HEK293 (cell line): ENCODE measurements at regions of chr19 and their contacts with region 1.

Region 1: GRCh38 chr19:42450314-42450934 is 7.7 kb upstream of the CXCL17 start:
- H3K4me3 ChIP-seq: no peak overlapping the region
- H3K27ac ChIP-seq: no peak overlapping the region
- H3K4me1 ChIP-seq: no peaks in the 10 kb centered on the region
- CTCF ChIP-seq: peak; percentile 96

Region 2: DNA sequence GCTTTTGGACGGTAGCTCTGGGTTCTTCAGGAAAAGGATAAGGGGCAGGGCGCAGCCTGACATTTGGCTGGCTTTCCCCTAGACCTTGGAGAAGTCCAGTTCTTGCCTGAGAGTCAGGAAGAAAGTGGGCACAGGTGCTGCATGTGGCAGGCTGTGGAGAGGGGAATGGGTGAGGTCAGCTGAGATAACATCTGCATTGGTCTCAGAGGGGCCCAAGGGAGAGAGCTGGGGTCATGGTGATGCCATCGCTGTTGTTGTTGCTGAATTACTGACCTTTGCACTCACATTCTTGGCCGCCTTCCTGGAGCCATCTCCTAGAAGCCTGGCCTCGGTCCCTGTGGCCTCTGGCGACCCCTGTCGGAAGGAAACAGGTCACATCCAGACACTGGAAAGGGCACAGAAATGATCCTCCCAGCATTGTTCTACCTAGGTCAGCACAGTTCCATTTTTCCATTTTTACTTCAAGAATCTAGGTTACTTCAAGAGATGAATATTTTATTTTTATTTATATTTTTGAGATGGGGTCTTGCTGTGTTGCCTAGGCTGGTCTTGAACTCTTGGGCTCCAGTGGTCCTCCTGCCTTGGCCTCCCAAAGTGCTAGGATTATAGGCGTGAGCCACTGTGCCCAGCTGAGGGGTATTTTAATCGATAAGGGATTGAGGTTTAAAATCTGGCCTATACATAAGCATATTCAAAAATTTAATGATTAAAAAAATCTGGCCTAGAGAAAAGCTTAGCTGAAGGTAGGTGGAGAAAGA is 16.7 kb before region 1 on chr19:
- CTCF ChIA-PET with region 1: interaction called, 56 read pairs
- POLR2A ChIA-PET with region 1: no interaction called
- H3K4me3 ChIP-seq: no peak overlapping the region
- H3K27ac ChIP-seq: no peak overlapping the region
- H3K4me1 ChIP-seq: peaks cover 5% of the 10 kb centered on the region; the same call in 1 of the 2 replicates
- CTCF ChIP-seq: peak; percentile 53; the same call in 1 of the 2 replicates

Region 3: GRCh38 chr19:42461700-42462324 is 11.4 kb after region 1 on chr19:
- CTCF ChIA-PET with region 1: interaction called, 19 read pairs
- POLR2A ChIA-PET with region 1: interaction called, 3 read pairs
- H3K4me3 ChIP-seq: no peak overlapping the region
- H3K27ac ChIP-seq: no peak overlapping the region
- H3K4me1 ChIP-seq: peaks cover 7% of the 10 kb centered on the region
- CTCF ChIP-seq: no peak

Region 4: GRCh38 chr19:42468273-42468796 is 17.9 kb after region 1 on chr19:
- CTCF ChIA-PET with region 1: interaction called, 19 read pairs
- POLR2A ChIA-PET with region 1: interaction called, 3 read pairs
- H3K4me3 ChIP-seq: no peak overlapping the region
- H3K27ac ChIP-seq: peak overlapping the region; percentile 60; the same call in 1 of the 2 replicates
- H3K4me1 ChIP-seq: peaks cover 34% of the 10 kb centered on the region
- CTCF ChIP-seq: no peak

Region 5: DNA sequence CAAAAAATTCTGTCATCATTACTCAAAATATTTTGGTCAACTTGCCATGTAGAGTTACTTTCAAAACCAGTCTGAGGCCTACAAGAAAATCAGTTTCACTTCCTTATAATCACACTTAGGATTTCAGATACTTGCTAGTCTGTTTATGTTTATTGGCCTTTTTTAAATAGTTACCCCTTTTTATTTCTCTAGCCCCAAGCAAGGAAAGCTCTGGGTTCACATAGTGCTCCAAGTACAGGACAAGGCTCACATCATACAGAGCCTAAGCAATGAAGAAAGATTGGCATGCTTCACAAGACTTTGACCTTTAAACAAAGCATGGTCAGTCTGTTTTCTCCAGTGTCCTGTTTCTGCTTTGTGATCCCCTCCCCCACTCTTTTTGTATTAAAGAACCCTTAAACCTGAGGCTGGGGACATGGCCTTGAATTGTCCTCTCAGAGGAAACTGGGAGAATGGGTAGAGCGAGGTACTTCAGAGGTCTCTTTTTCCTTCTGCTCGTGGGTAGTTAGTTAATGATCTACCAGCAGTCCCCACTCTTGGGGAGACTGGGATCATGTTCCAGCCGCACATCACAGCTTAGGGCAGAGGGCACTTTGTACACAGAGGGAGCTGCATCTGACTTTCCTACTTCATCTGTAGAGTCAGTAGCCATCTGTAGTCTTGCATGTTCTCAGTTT is 47.2 kb after region 1 on chr19:
- CTCF ChIA-PET with region 1: interaction called, 15 read pairs
- POLR2A ChIA-PET with region 1: interaction called, 4 read pairs
- H3K4me3 ChIP-seq: no peak overlapping the region
- H3K27ac ChIP-seq: no peak overlapping the region
- H3K4me1 ChIP-seq: peaks cover 6% of the 10 kb centered on the region; the same call in 1 of the 2 replicates
- CTCF ChIP-seq: no peak

Region 6: DNA sequence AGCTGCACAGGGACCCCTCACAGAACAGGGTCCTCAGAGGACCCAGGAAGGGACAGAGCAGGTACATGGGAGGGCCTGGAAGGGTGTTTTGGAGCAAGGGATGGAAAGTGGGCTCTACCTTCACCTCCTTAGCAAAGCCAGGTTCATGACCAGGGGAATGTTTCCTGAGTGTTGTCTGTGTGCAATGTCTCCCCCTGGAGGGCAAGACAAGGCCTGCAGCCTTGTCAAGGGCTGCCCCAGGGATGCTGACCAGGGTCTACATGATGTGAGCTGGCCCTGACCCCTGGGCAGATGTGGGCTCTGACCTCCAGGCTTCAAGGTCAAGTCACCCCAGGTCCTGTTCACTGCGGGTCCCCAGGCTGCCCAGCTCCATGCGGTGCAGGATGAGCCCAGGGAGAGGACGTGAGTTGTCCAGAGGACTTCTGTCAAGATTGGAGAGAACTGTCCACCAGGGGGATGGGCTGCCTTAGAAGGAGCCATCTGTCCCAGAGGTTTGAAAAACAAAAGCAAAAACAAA is 78.9 kb after region 1 on chr19:
- CTCF ChIA-PET with region 1: interaction called, 209 read pairs
- POLR2A ChIA-PET with region 1: interaction called, 3 read pairs
- H3K4me3 ChIP-seq: no peak overlapping the region
- H3K27ac ChIP-seq: no peak overlapping the region
- H3K4me1 ChIP-seq: no peaks in the 10 kb centered on the region
- CTCF ChIP-seq: peak; percentile 91

Region 7: DNA sequence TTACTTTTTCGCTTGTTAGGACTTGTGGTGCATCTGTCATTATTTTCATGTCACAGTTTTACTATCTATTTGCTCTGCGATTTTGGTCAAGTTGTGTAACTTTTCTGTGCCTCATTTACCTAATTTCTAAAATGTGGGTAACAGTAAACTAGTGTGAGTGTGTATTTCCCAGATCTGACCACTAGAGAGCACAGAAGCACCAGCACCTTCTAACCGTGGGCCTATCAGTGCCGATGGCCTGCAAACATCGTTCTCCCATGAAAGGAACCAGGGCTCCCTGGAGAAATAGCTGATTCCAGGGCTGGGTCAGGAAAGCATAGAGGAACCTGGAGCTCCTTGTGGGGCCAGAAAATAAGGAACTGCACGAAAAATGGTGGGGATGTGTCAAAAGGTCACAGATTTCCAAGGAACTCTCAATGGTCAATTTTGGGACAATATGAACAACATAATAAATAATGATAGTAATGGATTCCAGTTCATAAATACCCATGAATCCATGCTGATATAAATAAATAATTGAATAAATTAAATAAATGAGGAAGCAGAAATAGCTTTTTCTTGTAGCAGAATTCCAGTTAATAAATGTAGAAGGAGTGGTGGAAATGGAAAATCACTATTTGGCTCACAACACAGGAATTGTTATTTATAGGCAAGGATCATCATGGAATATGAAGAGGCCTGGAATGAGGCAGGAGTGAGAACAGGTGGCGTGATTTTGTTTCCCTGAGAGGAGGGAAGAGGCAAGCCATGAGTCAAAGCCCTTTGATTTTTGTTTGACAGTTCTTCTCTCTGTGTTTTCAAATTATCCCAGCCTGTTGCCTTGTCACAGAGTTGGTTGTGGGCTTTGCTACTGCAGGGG is 113.2 kb after region 1 on chr19:
- CTCF ChIA-PET with region 1: interaction called, 23 read pairs
- POLR2A ChIA-PET with region 1: no interaction called
- H3K4me3 ChIP-seq: no peak overlapping the region
- H3K27ac ChIP-seq: no peak overlapping the region
- H3K4me1 ChIP-seq: no peaks in the 10 kb centered on the region
- CTCF ChIP-seq: peak; percentile 69; the same call in 1 of the 2 replicates